ENCODE measurements at regions of chr3 and their contacts with region 1.

Region 1: GRCh38 chr3:122975163-122975923 is 52.2 kb downstream of the SEMA5B start:
- DNase-seq: no peak
- ATAC-seq: no peak

Region 2: DNA sequence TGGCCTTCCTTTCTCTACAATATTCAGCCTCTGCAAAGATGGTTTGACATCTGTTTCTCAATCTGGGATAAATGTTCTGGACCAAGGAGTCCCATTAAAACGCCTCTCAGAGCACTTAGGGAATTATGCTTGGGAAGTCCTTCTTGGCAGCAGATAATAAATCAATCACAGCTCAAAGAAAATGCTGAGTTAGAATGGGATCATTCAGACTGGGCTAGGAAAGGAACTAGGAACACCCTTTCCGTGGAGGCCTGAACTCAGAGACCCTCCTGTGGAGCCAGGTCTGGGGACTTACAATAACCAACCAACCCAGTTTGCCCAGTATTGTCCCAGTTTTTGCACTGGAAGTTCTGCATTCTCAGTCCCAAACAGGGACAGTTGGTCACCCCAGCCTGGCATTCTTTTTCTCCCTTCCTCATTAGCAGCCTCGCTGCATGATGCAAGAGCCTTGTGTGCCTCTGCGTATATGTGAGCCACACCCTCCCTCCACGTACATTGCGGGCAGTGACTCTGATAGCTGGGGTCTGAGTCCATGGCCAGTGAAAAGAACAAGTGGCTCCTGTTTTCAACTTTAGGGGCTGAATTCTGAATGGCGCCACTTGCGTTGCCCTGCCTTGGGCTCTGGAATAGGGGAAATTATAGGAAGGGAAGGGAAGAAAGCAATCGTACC is 36.5 kb before region 1 on chr3:
- intact Hi-C with region 1: no loop called
- DNase-seq: peak; percentile 78
- ATAC-seq: no peak

Region 3: DNA sequence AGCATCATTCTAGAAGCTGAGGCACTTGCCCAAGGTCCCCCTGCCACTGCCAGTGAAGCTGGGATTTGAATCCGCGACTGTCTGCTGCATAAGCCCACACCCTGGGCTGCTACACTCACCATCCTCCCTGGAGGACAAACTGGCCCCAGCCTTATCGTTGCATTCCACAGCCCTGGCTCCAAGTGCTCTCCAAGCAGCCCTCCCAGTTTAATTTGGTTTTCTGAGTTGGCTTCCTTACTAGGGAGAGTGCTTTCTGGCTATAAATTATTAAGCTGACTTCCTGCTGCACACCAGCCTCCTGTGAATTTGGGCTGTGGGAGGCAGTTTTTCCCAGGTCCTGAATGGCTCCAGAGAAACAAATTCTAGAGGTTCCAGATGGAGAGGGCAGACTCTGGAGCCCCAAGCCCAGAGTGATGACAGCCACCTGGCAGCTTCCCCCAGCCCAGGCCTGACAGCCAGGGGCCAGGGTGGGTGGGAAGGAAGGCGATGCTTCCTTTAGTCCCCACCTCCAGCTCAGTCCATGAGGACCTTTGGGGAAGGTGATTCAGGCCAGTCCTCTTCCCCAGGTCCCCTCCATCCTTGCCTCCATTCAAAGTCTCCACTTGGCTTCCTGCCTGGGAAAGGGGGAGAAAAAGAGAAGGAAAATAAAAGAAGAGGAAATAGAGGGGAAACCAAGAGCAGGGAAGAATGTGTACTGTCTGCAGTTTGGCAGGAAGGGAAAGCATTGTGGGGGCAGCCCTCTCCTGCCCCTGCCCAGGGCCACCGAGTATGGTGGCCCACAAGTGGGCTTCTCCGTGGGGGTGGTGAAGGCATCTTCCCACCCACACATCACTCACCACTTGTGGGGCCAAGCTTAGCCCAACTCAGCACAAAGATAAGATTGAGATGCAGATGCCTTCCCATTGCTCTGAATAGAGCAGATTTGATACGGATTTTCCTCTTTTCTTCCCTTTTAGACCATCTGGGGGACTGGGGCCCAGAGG is 17.3 kb before region 1 on chr3:
- intact Hi-C with region 1: loop called (anchors 2 kb)
- DNase-seq: no peak
- ATAC-seq: peak; percentile 92